IMR-90 (cell line): ENCODE measurements at regions of chr5 and their contacts with region 1.

Region 1: DNA sequence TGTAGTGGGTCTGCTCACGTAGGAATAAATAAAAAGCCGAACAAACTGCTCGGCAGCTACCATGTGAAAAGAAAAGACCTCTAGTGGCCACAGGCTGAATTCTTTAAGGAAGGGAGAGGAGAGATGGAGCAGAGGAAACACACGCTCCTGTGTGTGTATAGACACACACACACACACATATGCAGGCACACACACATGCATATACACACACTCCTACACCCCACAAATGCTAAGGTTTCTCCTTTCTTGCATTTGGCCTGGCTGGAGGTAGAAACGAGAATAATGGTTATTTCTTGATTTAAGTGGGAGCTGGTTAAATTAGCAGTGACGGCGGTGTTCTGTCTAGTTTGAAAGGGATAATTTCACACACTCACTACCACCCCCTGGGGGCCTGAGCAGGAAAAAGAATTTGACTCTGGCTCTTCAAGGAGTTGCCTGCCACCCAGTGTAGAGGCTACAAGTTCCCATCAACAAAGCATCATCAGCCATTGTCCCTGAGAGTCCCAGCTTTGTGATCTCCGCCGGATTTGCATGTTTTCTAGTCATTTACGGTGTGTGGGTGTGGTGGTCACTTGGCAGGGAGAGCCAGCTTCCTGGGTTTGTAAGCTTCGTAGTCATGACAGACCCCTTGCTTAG is at the start of gene INSYN2B:
- DNase-seq: peak; percentile 87
- ATAC-seq: peak; percentile 79
- H3K4me3 ChIP-seq: peak within 1 kb of the TSS; percentile 66
- H3K27ac ChIP-seq: peak within 1 kb of the TSS; percentile 85
- H3K4me1 ChIP-seq: peaks cover 21% of the 10 kb centered on the region
- H3K27me3 ChIP-seq: no peaks in the 10 kb centered on the region
- CTCF ChIP-seq: peak; percentile 89
- POLR2A ChIP-seq: peak; percentile 55
- RAD21 ChIP-seq: peak; percentile 78
- total RNA-seq, gene INSYN2B: 33.5 and 43.6 TPM in 2 replicates

Region 2: DNA sequence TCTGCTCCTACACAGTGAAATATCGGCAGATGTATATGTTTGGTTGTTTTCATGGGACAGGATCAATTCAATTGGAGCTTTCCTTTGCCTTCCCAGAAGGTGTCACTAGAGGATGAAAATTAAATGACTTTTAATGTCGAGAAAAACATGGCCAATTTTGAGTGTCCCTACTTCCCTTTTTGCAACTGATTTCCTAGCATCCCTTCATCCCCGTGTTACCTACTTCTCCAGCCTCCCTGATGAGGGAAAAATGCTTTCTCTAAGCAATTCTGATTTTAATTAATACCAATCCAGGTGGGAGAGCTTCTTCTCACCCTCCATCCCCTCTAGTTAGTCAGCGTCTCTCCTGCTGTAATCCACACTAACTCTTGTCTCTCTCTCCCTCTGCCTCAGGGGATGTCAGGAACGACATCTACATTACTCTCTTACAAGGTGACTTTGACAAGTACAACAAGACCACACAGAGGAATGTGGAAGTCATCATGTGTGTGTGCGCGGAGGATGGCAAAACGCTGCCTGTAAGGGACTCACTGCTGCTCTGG is 278.6 kb before region 1 on chr5:
- CTCF ChIA-PET with region 1: interaction called, 117 read pairs
- POLR2A ChIA-PET with region 1: interaction called, 3 read pairs
- dilution Hi-C with region 1: no loop called
- in situ Hi-C with region 1: loop called (anchors 5 kb)
- intact Hi-C with region 1: loop called (anchors 1 kb)
- DNase-seq: peak; percentile 64
- ATAC-seq: peak; percentile 72
- H3K4me3 ChIP-seq: no peak overlapping the region
- H3K27ac ChIP-seq: no peak overlapping the region
- H3K4me1 ChIP-seq: peaks cover 24% of the 10 kb centered on the region
- H3K27me3 ChIP-seq: no peaks in the 10 kb centered on the region
- CTCF ChIP-seq: peak; percentile 80
- POLR2A ChIP-seq: no peak
- RAD21 ChIP-seq: peak; percentile 78

Region 3: DNA sequence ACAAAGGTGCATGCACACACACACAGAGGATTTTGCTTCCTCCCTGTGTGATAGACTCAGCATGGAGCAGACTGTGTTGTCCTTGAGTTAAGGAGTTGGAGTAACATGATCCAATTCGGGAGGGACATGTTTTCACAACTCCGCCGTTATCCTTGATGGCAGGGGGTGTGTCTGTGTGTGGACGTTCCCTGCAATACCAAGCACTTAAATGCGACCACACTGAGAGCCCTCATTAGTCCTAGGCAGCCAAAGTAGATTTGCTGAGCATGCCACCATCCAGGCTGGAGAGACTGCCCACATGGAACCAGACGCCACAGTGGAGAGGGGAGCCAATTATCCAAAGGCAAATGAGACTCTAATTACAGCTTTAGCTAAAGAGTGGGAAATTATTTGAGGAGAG is 203.4 kb before region 1 on chr5:
- CTCF ChIA-PET with region 1: no interaction called
- POLR2A ChIA-PET with region 1: no interaction called
- dilution Hi-C with region 1: no loop called
- in situ Hi-C with region 1: no loop called
- intact Hi-C with region 1: no loop called
- DNase-seq: no peak
- ATAC-seq: no peak
- H3K4me3 ChIP-seq: no peak overlapping the region
- H3K27ac ChIP-seq: no peak overlapping the region
- H3K4me1 ChIP-seq: no peaks in the 10 kb centered on the region
- H3K27me3 ChIP-seq: no peaks in the 10 kb centered on the region
- CTCF ChIP-seq: no peak
- POLR2A ChIP-seq: no peak
- RAD21 ChIP-seq: no peak

Region 4: GRCh38 chr5:169795338-169795737 is 185.2 kb before region 1 on chr5:
- CTCF ChIA-PET with region 1: interaction called, 10 read pairs
- POLR2A ChIA-PET with region 1: no interaction called
- dilution Hi-C with region 1: no loop called
- in situ Hi-C with region 1: no loop called
- intact Hi-C with region 1: no loop called
- DNase-seq: no peak
- ATAC-seq: no peak
- H3K4me3 ChIP-seq: no peak overlapping the region
- H3K27ac ChIP-seq: no peak overlapping the region
- H3K4me1 ChIP-seq: 0 out of 2 replicates have a peak, but pooled peaks cover 2% of the 10 kb centered on the region
- H3K27me3 ChIP-seq: no peaks in the 10 kb centered on the region
- CTCF ChIP-seq: no peak
- POLR2A ChIP-seq: no peak
- RAD21 ChIP-seq: no peak

Region 5: GRCh38 chr5:169861934-169862333 is 118.6 kb before region 1 on chr5:
- CTCF ChIA-PET with region 1: interaction called, 6 read pairs
- POLR2A ChIA-PET with region 1: no interaction called
- dilution Hi-C with region 1: no loop called
- in situ Hi-C with region 1: no loop called
- intact Hi-C with region 1: loop called (anchors 1 kb)
- DNase-seq: peak; percentile 96
- ATAC-seq: peak; percentile 95
- H3K4me3 ChIP-seq: no peak overlapping the region
- H3K27ac ChIP-seq: no peak overlapping the region
- H3K4me1 ChIP-seq: peaks cover 2% of the 10 kb centered on the region
- H3K27me3 ChIP-seq: no peaks in the 10 kb centered on the region
- CTCF ChIP-seq: no peak
- POLR2A ChIP-seq: no peak
- RAD21 ChIP-seq: peak; percentile 4; the same call in 1 of the 2 replicates

Region 6: DNA sequence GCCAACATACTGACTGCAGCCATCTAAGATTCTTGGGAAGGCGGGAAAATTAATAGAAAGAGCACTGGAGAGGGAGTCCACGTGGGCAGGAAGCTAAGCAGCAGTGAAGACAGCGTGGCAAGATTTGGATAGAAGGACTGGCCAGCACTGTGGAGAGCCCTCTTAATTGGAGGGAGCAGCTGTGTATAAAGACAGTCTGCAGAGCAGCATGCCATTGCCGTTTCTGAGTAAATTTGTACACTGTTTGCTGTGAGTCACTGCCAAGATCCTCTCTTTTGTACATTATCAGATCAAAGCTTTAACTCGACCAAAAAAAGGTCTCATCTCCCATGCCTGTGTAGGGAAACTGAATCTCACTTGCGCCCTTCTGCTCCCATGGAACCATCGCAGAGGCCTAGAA is 45.5 kb before region 1 on chr5:
- CTCF ChIA-PET with region 1: interaction called, 10 read pairs
- POLR2A ChIA-PET with region 1: no interaction called
- dilution Hi-C with region 1: no loop called
- in situ Hi-C with region 1: no loop called
- intact Hi-C with region 1: no loop called
- DNase-seq: peak; percentile 72
- ATAC-seq: peak; percentile 96
- H3K4me3 ChIP-seq: no peak overlapping the region
- H3K27ac ChIP-seq: no peak overlapping the region; the same call in 1 of the 2 replicates
- H3K4me1 ChIP-seq: peaks cover 13% of the 10 kb centered on the region
- H3K27me3 ChIP-seq: no peaks in the 10 kb centered on the region
- CTCF ChIP-seq: no peak
- POLR2A ChIP-seq: no peak
- RAD21 ChIP-seq: no peak

Region 7: DNA sequence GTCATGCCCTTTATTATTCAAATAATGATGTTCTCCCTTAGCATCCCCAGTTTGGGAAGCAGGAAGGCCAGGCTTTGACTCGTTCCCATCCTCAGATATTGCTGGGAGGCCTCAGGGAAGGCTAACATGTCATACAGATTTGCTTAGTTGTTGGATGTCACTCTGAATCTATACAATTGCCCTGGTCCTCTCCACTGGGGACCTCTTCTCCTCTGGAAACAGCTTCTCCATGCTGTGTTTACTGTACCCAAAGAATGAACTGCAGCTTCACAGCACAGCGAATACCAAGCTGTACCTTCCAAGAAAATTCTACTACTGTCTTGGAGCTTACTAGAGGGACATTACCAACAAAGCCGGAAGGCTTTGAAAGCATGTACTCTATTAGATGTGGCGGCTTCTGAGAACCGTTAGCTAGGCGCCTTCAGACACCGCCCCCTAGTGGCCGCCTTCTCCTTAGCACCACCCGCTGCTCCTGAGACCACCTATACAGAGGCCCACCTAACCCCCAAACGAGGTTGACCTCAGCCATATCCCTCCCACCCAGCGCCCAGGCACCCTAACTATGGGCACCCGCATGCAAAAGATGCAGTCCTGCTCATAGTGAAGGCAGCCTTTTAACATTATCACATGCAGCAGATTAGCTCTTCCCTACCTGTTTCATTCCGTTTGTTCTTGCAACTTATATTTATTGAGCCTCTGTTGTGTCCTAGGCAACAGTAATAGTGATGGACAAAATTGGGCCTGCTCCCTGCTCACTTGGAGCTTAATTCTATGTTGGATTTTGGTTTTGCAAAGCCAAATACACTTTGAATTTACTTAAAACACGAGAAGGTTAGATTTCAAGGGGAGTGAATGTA is 90.2 kb after region 1 on chr5:
- CTCF ChIA-PET with region 1: interaction called, 12 read pairs
- POLR2A ChIA-PET with region 1: no interaction called
- dilution Hi-C with region 1: no loop called
- in situ Hi-C with region 1: no loop called
- intact Hi-C with region 1: loop called (anchors 2 kb)
- DNase-seq: peak; percentile 45
- ATAC-seq: peak; percentile 97
- H3K4me3 ChIP-seq: no peak overlapping the region
- H3K27ac ChIP-seq: no peak overlapping the region
- H3K4me1 ChIP-seq: no peaks in the 10 kb centered on the region
- H3K27me3 ChIP-seq: peaks cover 4% of the 10 kb centered on the region
- CTCF ChIP-seq: peak; percentile 62
- POLR2A ChIP-seq: no peak
- RAD21 ChIP-seq: peak; percentile 72